SK-N-SH (cell line): ENCODE measurements at regions of chr10 and their contacts with region 1.

Region 1: DNA sequence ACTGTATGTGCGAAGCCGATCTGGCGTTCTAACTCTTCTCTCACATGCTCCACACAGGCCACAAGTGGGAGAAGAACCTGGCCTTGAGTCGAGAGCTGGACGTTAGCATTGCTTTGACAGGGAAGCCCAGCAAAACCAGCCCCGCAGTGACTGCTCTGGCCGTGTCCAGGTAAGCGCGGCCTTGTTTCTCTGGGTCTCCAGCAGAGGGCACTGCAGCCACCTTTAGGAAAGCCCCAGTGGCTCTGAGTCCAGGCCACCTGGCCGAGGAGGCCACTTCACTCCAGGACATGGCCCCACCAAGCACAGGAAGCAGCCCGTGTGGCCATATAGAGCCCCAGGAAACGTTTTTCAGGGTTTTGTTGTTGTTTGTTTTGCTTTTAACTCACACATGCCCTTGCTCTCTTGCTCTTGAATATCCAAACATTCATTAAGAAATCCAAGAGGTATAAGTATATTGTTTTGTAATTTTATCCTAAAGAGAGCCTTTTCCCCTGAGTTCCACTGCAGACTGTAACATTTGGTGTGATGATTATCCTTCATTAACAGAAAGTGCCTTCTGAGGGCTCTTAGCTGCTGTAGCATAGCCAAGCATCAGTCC is 41.8 kb upstream of the LRRC18 start:
- DNase-seq: peak; percentile 85
- H3K4me3 ChIP-seq: peak overlapping the region in 1 of 2 experiments; percentile 42; a peak in 1 of 4 replicates
- H3K27ac ChIP-seq: no peak overlapping the region
- H3K4me1 ChIP-seq: no peaks in the 10 kb centered on the region; a peak in 1 of 4 replicates
- H3K27me3 ChIP-seq: no peaks in the 10 kb centered on the region
- CTCF ChIP-seq: peak; percentile 57
- EP300 ChIP-seq: no peak
- RAD21 ChIP-seq: peak; percentile 89

Region 2: GRCh38 chr10:49164559-49165188 is 183.3 kb after region 1 on chr10:
- CTCF ChIA-PET with region 1: interaction called, 14 read pairs
- POLR2A ChIA-PET with region 1: no interaction called
- DNase-seq: peak; percentile 65
- H3K4me3 ChIP-seq: no peak overlapping the region; a peak in 1 of 4 replicates
- H3K27ac ChIP-seq: no peak overlapping the region
- H3K4me1 ChIP-seq: peaks cover 0 to 20% of the 10 kb centered on the region in 2 experiments; a peak in 1 of 4 replicates
- H3K27me3 ChIP-seq: no peaks in the 10 kb centered on the region
- CTCF ChIP-seq: peak; percentile 34
- EP300 ChIP-seq: no peak
- RAD21 ChIP-seq: peak; percentile 66